ENCODE measurements at regions of chr14 and their contacts with region 1.

Region 1: GRCh38 chr14:88868558-88869159 is 44.2 kb downstream of the TTC8 start:
- DNase-seq: peak; percentile 4
- H3K4me3 ChIP-seq: no peak overlapping the region
- CTCF ChIP-seq: peak; percentile 47

Region 2: DNA sequence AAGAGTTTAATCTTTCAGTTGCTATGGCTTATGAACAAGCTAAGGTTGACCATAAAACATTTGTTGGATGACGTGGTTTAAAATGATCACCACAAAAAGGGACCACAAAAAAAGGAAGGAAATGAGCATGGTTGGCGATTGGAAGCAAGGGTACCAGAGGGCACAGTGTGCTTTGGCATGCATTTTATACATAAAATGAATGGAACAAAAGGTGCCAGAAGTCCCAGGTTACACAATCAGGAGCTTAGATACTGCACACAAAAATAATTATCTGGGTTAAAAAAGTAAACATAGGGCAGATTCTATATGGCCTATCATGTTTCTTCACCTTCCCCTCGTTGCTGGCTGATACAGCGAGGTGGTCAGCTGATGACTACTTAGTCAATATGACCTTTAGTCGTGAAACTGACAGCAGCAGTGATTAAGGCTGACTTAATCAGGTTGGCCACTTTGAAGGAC is 255.1 kb before region 1 on chr14:
- in situ Hi-C with region 1: loop called (anchors 25 kb)
- DNase-seq: peak; percentile 83
- H3K4me3 ChIP-seq: no peak overlapping the region
- CTCF ChIP-seq: no peak

Measured in astrocyte of the cerebellum (primary cell).